Vagina (tissue), 2 donors: ENCODE measurements at regions of chrX and their contacts with region 1.

Region 1: GRCh38 chrX:49172280-49172780 is 632 bp downstream of the PLP2 start:
- DNase-seq: no peak
- H3K4me3 ChIP-seq: peak overlapping the region; percentile 63 to 73
- H3K27ac ChIP-seq: peak overlapping the region; percentile 90
- H3K4me1 ChIP-seq: peaks cover 12% of the 10 kb centered on the region
- H3K27me3 ChIP-seq: no peaks in the 10 kb centered on the region
- CTCF ChIP-seq: no peak
- POLR2A ChIP-seq: no peak

Region 2: GRCh38 chrX:49073601-49074571 is 98.4 kb before region 1 on chrX and contains the start of gene PRAF2:
- intact Hi-C with region 1: loop called (anchors 10 kb)
- DNase-seq: peak in 1 of 2 donors; percentile 93
- H3K4me3 ChIP-seq: peak within 1 kb of the TSS; percentile 53 to 55
- H3K27ac ChIP-seq: peak within 1 kb of the TSS; percentile 57
- H3K4me1 ChIP-seq: peaks cover 5% of the 10 kb centered on the region
- H3K27me3 ChIP-seq: no peaks in the 10 kb centered on the region
- CTCF ChIP-seq: no peak
- POLR2A ChIP-seq: peak in 1 of 2 donors; percentile 46
- total RNA-seq, gene PRAF2: 24.1 TPM

Region 3: DNA sequence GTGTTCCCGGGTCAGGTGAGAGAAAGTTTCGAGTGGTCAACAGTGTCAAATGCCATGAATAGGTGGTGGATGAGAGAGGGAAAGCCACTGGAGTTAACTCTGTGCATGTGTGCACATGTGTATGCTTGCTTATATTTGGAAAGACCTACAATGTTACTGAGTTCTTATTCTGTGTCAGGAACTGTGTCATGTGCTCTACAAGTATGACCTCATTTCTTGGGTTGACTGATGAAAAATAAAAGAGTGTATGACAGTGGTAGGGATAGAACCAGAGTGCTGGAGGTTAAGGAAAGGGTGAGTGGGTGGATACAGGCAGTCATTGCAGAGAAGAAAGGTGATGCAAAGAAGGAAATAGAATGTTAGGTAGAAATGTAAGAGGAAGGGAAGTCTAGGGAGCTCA is 1320.4 kb after region 1 on chrX:
- intact Hi-C with region 1: no loop called
- DNase-seq: no peak
- H3K4me3 ChIP-seq: no peak overlapping the region
- H3K27ac ChIP-seq: no peak overlapping the region
- H3K4me1 ChIP-seq: no peaks in the 10 kb centered on the region
- H3K27me3 ChIP-seq: no peaks in the 10 kb centered on the region
- CTCF ChIP-seq: no peak
- POLR2A ChIP-seq: no peak